ENCODE measurements at regions of chr6 and their contacts with region 1.

Region 1: DNA sequence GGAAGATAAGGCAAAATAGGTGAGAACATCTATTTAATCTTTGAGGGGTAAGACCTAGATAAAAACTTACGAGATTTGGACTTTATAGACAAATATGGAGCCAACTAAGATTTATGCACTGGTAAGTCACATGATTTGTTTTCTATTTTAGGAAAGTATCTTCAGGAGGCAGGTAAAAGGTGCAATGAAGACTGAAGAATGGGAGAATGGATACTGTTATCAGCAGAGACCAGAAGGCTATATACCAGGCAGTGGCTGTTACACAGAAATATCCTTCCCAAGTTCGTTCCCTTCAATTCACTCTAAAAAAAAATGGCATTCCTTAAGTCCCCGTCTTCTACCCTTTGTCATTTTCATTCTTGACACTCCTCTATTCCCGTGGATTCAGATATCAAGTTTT is 123.8 kb downstream of the MYB start:
- DNase-seq: no peak
- H3K4me3 ChIP-seq: no peak overlapping the region
- H3K27ac ChIP-seq: no peak overlapping the region
- H3K4me1 ChIP-seq: no peaks in the 10 kb centered on the region
- H3K27me3 ChIP-seq: no peaks in the 10 kb centered on the region
- CTCF ChIP-seq: no peak
- POLR2A ChIP-seq: no peak

Region 2: DNA sequence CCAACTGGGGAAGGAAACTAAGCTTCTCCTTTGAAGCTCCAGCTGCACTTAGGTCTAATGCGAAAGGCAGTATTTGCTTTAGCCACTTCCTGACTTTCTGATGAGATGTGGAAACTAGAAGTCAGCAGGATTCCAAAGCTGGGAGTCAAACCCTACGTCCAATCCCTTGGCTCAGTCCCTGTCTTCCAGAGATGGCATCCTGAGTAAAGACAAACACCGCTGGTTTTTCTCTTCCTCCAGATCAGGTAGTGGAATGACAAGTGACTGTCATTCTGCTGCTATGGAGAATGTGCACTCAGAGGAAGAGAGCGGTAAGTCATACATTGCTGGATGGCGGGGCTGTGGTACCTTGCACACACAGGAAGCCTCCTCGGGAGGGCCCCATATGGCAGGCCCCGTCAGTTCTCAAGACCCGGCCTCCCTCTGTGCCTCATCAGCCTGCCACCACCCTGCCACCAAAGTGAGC is 52.9 kb before region 1 on chr6:
- CTCF ChIA-PET with region 1: no interaction called
- POLR2A ChIA-PET with region 1: no interaction called
- dilution Hi-C with region 1: no loop called
- intact Hi-C with region 1: no loop called
- DNase-seq: no peak
- H3K4me3 ChIP-seq: no peak overlapping the region
- H3K27ac ChIP-seq: no peak overlapping the region
- H3K4me1 ChIP-seq: no peaks in the 10 kb centered on the region
- H3K27me3 ChIP-seq: peaks cover 4 to 8% of the 10 kb centered on the region in 2 experiments
- CTCF ChIP-seq: no peak
- POLR2A ChIP-seq: no peak

Region 3: DNA sequence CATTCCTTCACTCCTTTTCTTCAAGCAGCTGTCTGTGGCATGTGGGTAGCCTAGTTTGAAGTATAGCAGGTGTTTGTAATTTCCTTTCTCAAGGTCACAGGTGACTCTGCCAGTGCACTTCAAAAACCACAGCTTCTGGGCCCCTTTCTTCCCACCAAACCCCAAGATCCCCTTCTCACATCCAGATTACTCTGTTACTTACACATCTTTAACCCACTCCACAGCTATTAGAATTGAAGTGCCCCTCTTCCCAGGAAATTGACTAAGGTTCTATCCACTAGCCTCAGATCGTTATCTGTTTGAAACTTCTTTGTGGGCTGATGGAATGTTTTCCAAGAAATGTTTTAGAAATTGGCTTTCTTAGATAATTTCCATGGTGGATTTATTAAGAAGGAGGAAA is 41.9 kb after region 1 on chr6:
- CTCF ChIA-PET with region 1: no interaction called
- POLR2A ChIA-PET with region 1: no interaction called
- dilution Hi-C with region 1: no loop called
- intact Hi-C with region 1: loop called (anchors 1 kb)
- DNase-seq: peak; percentile 36
- H3K4me3 ChIP-seq: no peak overlapping the region
- H3K27ac ChIP-seq: no peak overlapping the region
- H3K4me1 ChIP-seq: peaks cover 13% of the 10 kb centered on the region
- H3K27me3 ChIP-seq: no peaks in the 10 kb centered on the region
- CTCF ChIP-seq: no peak
- POLR2A ChIP-seq: no peak

Region 4: GRCh38 chr6:135393289-135393688 is 88.4 kb after region 1 on chr6:
- CTCF ChIA-PET with region 1: no interaction called
- POLR2A ChIA-PET with region 1: no interaction called
- dilution Hi-C with region 1: no loop called
- intact Hi-C with region 1: no loop called
- DNase-seq: no peak
- H3K4me3 ChIP-seq: no peak overlapping the region
- H3K27ac ChIP-seq: no peak overlapping the region
- H3K4me1 ChIP-seq: no peaks in the 10 kb centered on the region
- H3K27me3 ChIP-seq: no peaks in the 10 kb centered on the region
- CTCF ChIP-seq: no peak
- POLR2A ChIP-seq: no peak

Measured in endothelial cell of umbilical vein (primary cell).